Ascending aorta (tissue), 2 donors: ENCODE measurements at regions of chr7 and their contacts with region 1.

Region 1: DNA sequence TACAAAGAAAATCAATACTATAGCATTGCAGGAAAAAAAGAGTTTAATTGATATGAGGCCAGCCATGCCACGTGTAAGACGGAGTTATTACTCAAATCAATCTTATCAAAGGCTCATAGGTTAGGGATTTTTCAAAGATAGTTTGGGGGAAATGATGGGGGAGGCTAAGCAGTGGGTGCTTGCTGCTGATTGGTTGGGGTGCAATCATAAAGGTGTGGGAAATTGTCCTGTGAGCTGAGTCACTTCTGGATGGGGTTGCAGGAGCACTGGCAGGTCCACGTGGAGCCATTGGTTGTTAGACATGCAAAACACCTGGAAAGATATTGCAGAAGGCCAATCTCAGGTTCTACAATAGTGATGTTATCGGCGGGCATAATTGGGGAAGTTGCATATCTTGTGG is 319.2 kb upstream of the COBL start:
- DNase-seq: no peak
- H3K4me3 ChIP-seq: no peak overlapping the region
- H3K27ac ChIP-seq: no peak overlapping the region
- H3K4me1 ChIP-seq: no peaks in the 10 kb centered on the region
- H3K27me3 ChIP-seq: no peaks in the 10 kb centered on the region
- CTCF ChIP-seq: no peak

Region 2: GRCh38 chr7:51034521-51035264 is 601.1 kb before region 1 on chr7:
- intact Hi-C with region 1: no loop called
- DNase-seq: peak in 1 of 2 donors; percentile 56
- H3K4me3 ChIP-seq: peak overlapping the region in 1 of 2 donors; percentile 17
- H3K27ac ChIP-seq: peak overlapping the region in 1 of 2 donors; percentile 30
- H3K4me1 ChIP-seq: peaks cover 0 to 12% of the 10 kb centered on the region in 2 donors
- H3K27me3 ChIP-seq: no peaks in the 10 kb centered on the region
- CTCF ChIP-seq: no peak

Region 3: GRCh38 chr7:51647931-51648351 is 12.2 kb after region 1 on chr7:
- intact Hi-C with region 1: loop called (anchors 1 kb)
- DNase-seq: no peak
- H3K4me3 ChIP-seq: no peak overlapping the region
- H3K27ac ChIP-seq: no peak overlapping the region
- H3K4me1 ChIP-seq: no peaks in the 10 kb centered on the region
- H3K27me3 ChIP-seq: no peaks in the 10 kb centered on the region
- CTCF ChIP-seq: no peak

Region 4: DNA sequence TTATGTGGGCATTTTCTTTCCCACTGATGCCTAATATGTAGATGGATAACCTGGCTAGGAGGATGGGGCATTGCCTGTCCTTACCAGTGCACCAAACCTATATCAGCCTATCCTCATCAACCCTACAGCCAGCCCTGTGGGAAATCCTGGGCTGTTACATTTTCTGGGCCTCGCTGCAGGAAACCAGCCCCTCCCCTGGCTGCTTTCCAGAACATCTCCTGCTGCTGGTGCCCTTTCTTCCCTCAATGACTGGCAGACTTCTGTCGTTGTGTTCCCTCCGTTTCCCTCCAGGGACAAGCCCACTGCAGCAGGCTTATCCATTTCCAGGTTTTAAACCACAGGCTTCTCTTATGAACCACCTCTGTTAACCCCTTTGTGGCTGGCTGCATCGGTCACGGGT is 166.9 kb after region 1 on chr7:
- intact Hi-C with region 1: no loop called
- DNase-seq: no peak
- H3K4me3 ChIP-seq: no peak overlapping the region
- H3K27ac ChIP-seq: no peak overlapping the region
- H3K4me1 ChIP-seq: no peaks in the 10 kb centered on the region
- H3K27me3 ChIP-seq: no peaks in the 10 kb centered on the region
- CTCF ChIP-seq: no peak